ENCODE measurements at regions of chr6 and their contacts with region 1.

Region 1: DNA sequence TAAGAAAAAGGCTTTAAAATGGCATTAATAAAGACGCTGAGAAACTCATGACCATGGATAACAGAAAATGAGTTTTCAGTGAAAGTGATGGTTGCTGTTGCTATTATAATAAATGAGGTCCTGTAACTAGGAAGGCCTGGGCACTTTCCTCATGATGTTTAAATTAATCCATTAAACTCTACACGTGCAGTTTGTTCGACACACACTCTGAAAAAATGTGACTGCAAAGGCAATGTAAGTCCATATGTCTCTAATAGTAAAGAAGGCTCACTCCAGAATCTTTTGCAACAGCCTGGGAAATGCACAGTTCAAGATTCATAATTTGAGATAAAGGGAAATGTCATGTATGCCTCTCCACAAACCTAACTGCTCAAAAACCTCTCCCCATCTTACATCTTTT is 153.4 kb downstream of the COL12A1 start:
- DNase-seq: no peak
- H3K4me3 ChIP-seq: no peak overlapping the region
- H3K4me3 Mint-ChIP-seq: no peak overlapping the region
- H3K27ac Mint-ChIP-seq: no peak overlapping the region
- H3K4me1 ChIP-seq: no peaks in the 10 kb centered on the region
- H3K4me1 Mint-ChIP-seq: no peaks in the 10 kb centered on the region
- H3K27me3 ChIP-seq: no peaks in the 10 kb centered on the region
- H3K27me3 Mint-ChIP-seq: no peaks in the 10 kb centered on the region
- CTCF ChIP-seq: no peak

Region 2: DNA sequence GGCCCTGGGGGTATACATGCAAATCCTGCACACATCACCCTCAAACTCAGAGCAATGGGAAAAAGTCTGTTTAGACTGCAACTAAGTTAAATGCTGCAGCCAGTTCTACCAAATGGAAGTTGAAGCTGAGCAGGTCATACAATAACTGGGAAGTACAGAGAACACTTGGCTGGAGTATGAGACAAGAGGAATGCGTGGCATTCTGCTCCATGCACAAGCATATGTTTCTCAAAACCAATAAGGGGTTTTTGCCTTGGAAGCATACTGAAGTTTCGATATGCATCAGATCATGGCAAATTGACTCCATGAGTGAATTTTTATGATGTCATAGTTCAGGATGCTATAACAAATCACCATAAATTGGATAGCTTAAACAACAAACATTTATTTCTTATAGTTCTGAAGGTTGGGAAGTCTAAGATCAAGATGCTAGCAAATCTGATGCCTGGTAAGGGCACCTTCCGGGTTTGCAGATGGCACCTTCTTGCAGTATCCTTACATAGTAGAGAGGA is 40.4 kb before region 1 on chr6:
- CTCF ChIA-PET with region 1: no interaction called
- POLR2A ChIA-PET with region 1: no interaction called
- intact Hi-C with region 1: loop called (anchors 1 kb)
- DNase-seq: no peak
- H3K4me3 ChIP-seq: no peak overlapping the region
- H3K4me3 Mint-ChIP-seq: no peak overlapping the region
- H3K27ac Mint-ChIP-seq: no peak overlapping the region
- H3K4me1 ChIP-seq: no peaks in the 10 kb centered on the region
- H3K4me1 Mint-ChIP-seq: no peaks in the 10 kb centered on the region
- H3K27me3 ChIP-seq: no peaks in the 10 kb centered on the region
- H3K27me3 Mint-ChIP-seq: no peaks in the 10 kb centered on the region
- CTCF ChIP-seq: no peak